OCI-LY7 (cell line): ENCODE measurements at regions of chr3 and their contacts with region 1.

Region 1: GRCh38 chr3:171772427-171773056 is 37.7 kb downstream of the PLD1 start:
- DNase-seq: peak; percentile 56
- H3K4me3 ChIP-seq: no peak overlapping the region
- H3K27ac ChIP-seq: no peak overlapping the region
- H3K4me1 ChIP-seq: no peaks in the 10 kb centered on the region
- CTCF ChIP-seq: peak; percentile 77

Region 2: DNA sequence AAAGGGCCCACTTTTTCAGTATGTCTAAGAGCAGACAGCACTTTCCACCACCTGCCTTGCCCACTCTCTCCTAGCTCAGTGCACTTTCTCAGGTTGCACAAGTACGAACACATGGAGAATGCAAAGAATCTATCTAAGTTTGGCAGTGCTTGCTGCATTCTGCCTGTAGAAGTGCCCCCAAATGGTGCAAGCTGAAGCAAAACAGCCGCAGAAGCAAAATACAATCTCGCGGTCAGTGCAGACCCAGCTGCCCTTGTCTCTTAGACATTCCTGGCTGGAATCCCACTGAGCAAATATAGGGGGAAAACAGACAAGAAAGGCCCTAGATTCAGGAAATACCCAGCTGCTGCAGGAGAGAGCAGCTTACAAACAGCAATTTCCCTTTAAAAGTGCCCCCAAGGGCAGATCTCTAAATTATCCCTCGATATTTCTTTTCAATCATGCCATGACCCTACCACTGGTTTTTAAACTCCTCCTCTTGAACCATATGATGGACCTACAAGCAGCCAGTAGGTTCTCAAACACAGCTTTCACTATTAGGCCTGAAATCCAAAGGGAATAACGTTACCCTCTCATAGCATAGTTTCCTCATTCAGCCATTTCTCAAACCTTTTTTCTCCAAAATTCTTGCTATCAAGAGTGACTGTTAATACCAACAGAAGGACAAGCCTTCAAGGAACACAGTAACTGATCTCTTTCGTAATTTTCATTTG is 379.4 kb before region 1 on chr3:
- CTCF ChIA-PET with region 1: no interaction called
- POLR2A ChIA-PET with region 1: no interaction called
- intact Hi-C with region 1: no loop called
- DNase-seq: no peak
- H3K4me3 ChIP-seq: no peak overlapping the region
- H3K27ac ChIP-seq: no peak overlapping the region
- H3K4me1 ChIP-seq: no peaks in the 10 kb centered on the region
- CTCF ChIP-seq: no peak

Region 3: DNA sequence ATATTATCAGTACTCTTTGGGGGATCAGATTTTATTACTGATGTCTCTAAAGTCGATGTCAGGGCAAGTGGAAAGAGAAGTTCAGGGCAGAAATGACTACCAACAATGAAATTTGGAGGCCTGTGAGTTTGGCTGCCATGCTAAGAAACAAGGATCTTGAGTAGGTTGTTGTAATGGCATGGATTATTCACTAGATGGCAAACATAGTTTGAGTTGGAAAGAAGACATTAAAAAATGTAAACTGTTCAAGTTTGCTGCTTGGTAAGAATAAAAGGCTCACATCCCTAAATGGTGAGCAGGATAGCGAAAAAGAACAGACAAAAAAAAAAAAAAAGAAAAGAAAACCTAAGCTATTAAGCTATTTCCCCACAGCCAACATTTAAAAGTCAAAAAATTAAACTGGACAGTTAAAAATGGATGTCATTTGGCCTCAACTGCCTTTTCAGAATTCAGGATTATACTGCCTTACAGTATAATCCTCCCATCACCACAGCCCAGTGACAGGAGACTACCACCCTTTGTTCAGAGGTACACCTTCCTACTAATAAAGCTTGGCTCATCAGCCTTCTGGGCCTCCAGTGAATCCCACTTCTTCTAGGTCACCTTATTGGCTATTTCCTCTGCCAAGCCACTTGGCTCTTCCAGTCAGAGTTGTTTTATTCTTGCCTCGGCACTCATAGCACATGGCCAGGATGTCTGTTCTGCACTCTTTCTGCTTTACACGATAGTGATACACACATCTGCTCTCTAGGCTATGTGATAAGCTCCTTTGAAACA is 126.0 kb before region 1 on chr3:
- CTCF ChIA-PET with region 1: no interaction called
- POLR2A ChIA-PET with region 1: interaction called, 3 read pairs
- intact Hi-C with region 1: loop called (anchors 2 kb)
- DNase-seq: peak; percentile 18
- H3K4me3 ChIP-seq: no peak overlapping the region
- H3K27ac ChIP-seq: no peak overlapping the region
- H3K4me1 ChIP-seq: no peaks in the 10 kb centered on the region
- CTCF ChIP-seq: peak; percentile 70

Region 4: GRCh38 chr3:171703756-171704401 is 68.7 kb before region 1 on chr3:
- CTCF ChIA-PET with region 1: no interaction called
- POLR2A ChIA-PET with region 1: interaction called, 4 read pairs
- intact Hi-C with region 1: loop called (anchors 2 kb)
- DNase-seq: peak; percentile 43
- H3K4me3 ChIP-seq: no peak overlapping the region
- H3K27ac ChIP-seq: no peak overlapping the region
- H3K4me1 ChIP-seq: no peaks in the 10 kb centered on the region
- CTCF ChIP-seq: peak; percentile 82

Region 5: GRCh38 chr3:172449466-172450149 is 677.1 kb after region 1 on chr3:
- CTCF ChIA-PET with region 1: no interaction called
- POLR2A ChIA-PET with region 1: no interaction called
- intact Hi-C with region 1: loop called (anchors 10 kb)
- DNase-seq: no peak
- H3K4me3 ChIP-seq: no peak overlapping the region
- H3K27ac ChIP-seq: no peak overlapping the region
- H3K4me1 ChIP-seq: no peaks in the 10 kb centered on the region
- CTCF ChIP-seq: no peak